Ovary (tissue), 10 donors: ENCODE measurements at regions of chr22 and their contacts with region 1.

Region 1: GRCh38 chr22:42179616-42180015 is 49.0 kb upstream of the CYP2D6 start:
- DNase-seq: no peak
- H3K4me3 ChIP-seq: no peak overlapping the region
- H3K27ac ChIP-seq: no peak overlapping the region
- H3K4me1 ChIP-seq: no peaks in the 10 kb centered on the region
- H3K27me3 ChIP-seq: no peaks in the 10 kb centered on the region
- CTCF ChIP-seq: no peak
- EP300 ChIP-seq: no peak
- POLR2A ChIP-seq: no peak

Region 2: GRCh38 chr22:42016101-42016500 is 163.5 kb before region 1 on chr22:
- intact Hi-C with region 1: no loop called
- DNase-seq: no peak
- H3K4me3 ChIP-seq: no peak overlapping the region
- H3K27ac ChIP-seq: no peak overlapping the region
- H3K4me1 ChIP-seq: no peaks in the 10 kb centered on the region
- H3K27me3 ChIP-seq: no peaks in the 10 kb centered on the region
- CTCF ChIP-seq: no peak
- EP300 ChIP-seq: no peak
- POLR2A ChIP-seq: no peak

Region 3: DNA sequence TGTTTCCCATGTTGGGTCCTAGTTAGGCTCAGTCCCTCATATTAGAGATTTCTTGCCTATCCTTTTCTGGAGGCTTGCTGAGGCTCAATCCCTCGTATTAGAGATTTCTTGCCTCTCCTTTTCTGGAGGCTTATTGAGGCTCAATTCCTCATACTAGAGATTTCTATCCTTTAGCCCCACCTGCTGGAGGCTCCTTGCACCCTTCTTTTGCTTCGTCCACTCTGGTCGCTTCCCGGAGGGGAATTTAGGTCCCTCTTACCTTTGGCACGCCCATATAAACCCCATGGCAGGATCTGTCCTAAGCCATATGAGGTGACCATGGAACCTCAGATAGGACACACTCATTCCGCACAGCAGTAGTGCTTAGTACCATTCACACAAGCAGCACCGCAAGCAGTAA is 64.9 kb before region 1 on chr22:
- intact Hi-C with region 1: no loop called
- DNase-seq: no peak
- H3K4me3 ChIP-seq: no peak overlapping the region
- H3K27ac ChIP-seq: no peak overlapping the region
- H3K4me1 ChIP-seq: peaks cover 1% of the 10 kb centered on the region
- H3K27me3 ChIP-seq: no peaks in the 10 kb centered on the region
- CTCF ChIP-seq: no peak
- EP300 ChIP-seq: no peak
- POLR2A ChIP-seq: no peak

Region 4: GRCh38 chr22:42214633-42215415 is 35.2 kb after region 1 on chr22:
- intact Hi-C with region 1: no loop called
- DNase-seq: no peak
- H3K4me3 ChIP-seq: no peak overlapping the region
- H3K27ac ChIP-seq: no peak overlapping the region
- H3K4me1 ChIP-seq: peaks cover 3% of the 10 kb centered on the region
- H3K27me3 ChIP-seq: no peaks in the 10 kb centered on the region
- CTCF ChIP-seq: no peak
- EP300 ChIP-seq: no peak
- POLR2A ChIP-seq: no peak

Region 5: GRCh38 chr22:42283278-42284201 is 103.9 kb after region 1 on chr22:
- intact Hi-C with region 1: loop called in 1 of 4 experiments (anchors 10 kb)
- DNase-seq: peak in 3 of 5 donors; percentile 33 to 44 (median 36)
- H3K4me3 ChIP-seq: peak overlapping the region; percentile 30
- H3K27ac ChIP-seq: no peak overlapping the region
- H3K4me1 ChIP-seq: peaks cover 7% of the 10 kb centered on the region
- H3K27me3 ChIP-seq: no peaks in the 10 kb centered on the region
- CTCF ChIP-seq: no peak
- EP300 ChIP-seq: no peak
- POLR2A ChIP-seq: no peak